Common myeloid progenitor, CD34-positive (primary cell): ENCODE measurements at regions of chr2 and their contacts with region 1.

Region 1: GRCh38 chr2:161116509-161116908 is 43.7 kb upstream of the TANK start:
- DNase-seq: peak in 2 of 3 donors; percentile 59 to 70
- H3K4me3 ChIP-seq: no peak overlapping the region
- H3K27ac ChIP-seq: no peak overlapping the region
- H3K4me1 ChIP-seq: peaks cover 0 to 12% (median 3%) of the 10 kb centered on the region in 4 experiments
- H3K27me3 ChIP-seq: no peaks in the 10 kb centered on the region

Region 2: GRCh38 chr2:161104054-161104553 is 12.4 kb before region 1 on chr2:
- CTCF ChIA-PET with region 1: interaction called, 13 read pairs
- POLR2A ChIA-PET with region 1: no interaction called
- DNase-seq: peak in 1 of 3 donors; percentile 36
- H3K4me3 ChIP-seq: no peak overlapping the region
- H3K27ac ChIP-seq: no peak overlapping the region
- H3K4me1 ChIP-seq: peaks cover 5 to 17% (median 7%) of the 10 kb centered on the region in 4 experiments
- H3K27me3 ChIP-seq: no peaks in the 10 kb centered on the region